ENCODE measurements at regions of chr15 and their contacts with region 1.

Region 1: DNA sequence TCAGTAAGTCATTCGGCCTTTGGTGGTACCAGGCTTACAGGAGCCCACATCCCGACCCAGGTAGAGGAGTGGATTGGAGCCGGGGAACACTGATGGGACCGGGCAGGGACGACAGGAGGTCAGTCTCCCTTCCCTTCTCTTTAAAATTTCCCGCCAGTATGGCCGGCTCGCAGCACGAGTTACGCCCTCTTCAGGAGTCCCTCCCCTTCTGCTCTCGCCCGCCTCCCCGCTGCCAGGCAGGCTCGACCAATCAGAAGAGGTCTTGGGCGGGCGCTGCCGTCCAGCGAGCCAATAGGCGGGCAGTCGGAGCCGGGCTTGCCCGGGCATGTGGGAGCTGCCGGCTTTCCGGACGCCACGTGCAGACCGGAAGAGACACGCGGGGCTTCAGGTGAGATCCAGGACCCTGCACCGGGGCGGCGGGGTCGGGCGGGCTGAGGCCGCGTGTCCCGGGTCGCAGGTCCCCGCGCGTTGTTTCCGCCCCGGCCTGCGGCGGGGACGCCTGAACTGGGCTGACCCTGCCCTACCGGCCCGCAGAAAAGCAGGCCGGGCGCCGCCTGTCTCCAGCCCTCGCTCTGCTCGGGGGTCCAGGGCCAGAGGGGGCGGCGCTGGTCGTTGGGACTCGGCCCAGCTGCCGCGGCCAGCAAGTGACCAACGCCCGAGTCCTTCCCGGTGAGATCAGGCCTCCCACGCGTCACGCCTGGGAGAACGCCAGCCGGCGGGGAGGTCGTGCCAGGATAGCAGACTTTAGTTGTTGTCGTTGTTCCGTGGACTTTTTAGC is at the start of gene AEN:
- DNase-seq: peak; percentile 96 to 98 (median 98)
- ATAC-seq: peak; percentile 99
- H3K4me3 ChIP-seq: peak within 1 kb of the TSS; percentile 56
- H3K27ac ChIP-seq: peak within 1 kb of the TSS; percentile 26
- H3K4me1 ChIP-seq: no peaks in the 10 kb centered on the region
- H3K27me3 ChIP-seq: no peaks in the 10 kb centered on the region
- total RNA-seq, gene AEN: 4.0 to 9.5 (median 6.9) TPM

Region 2: DNA sequence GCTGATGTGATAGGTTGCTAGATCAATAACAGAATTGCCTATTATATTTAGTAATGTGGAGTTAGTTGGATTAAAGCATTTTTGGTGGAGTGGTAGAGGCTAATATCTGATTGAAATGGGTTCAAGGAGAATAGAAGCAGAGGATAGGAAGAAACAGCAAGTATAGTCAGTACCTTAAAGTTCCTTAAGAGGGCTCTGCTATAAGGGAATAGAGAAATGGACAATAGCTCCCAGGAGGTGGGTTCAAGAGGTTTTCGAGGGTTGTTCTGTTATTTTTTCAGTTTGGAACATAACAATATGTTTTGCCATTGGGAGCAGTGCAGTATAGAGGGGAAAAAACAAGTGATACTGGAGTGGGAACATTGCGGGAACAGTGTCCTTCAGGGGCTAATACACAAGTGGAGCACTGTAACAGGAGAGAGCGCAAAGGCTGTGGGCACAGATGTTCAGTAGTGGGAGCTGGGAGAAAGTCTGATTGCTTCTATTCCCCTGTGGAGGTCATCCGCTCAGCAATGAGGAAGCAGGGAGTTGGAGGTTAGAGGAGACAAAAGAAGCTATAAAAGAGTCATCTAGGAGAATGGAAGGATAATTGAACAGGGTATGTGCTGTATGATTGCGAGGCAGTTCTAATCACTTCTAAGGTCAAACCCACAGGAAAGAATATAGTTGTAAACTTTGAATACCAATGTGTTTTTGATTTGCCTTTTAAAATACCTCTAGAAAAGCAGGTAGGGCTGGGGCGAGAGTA is 150.4 kb before region 1 on chr15:
- intact Hi-C with region 1: loop called in 1 of 4 experiments (anchors 5 kb)
- DNase-seq: no peak
- ATAC-seq: no peak
- H3K4me3 ChIP-seq: no peak overlapping the region
- H3K27ac ChIP-seq: no peak overlapping the region
- H3K4me1 ChIP-seq: peaks cover 2% of the 10 kb centered on the region
- H3K27me3 ChIP-seq: no peaks in the 10 kb centered on the region

Region 3: DNA sequence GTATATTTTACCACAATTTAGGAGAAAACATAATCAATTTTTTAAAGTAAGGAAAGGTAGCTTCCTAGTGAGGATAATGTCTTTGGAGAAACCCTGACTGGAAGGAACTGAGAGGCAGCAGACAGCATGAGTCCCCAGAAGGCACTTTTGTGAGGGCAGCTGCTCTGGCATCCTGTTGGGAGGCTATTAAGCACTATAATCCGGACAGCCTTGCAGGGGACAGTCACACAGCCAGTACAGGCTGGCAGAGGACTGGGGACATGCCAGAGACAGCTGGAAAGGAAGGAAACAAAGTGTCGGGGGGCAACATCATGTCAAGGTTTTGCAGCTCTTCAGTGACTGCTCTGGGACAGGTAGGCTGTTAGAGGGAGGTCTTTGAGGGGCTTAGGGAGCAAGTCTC is 197.7 kb after region 1 on chr15:
- intact Hi-C with region 1: no loop called
- DNase-seq: no peak
- ATAC-seq: no peak
- H3K4me3 ChIP-seq: no peak overlapping the region
- H3K27ac ChIP-seq: no peak overlapping the region
- H3K4me1 ChIP-seq: no peaks in the 10 kb centered on the region
- H3K27me3 ChIP-seq: no peaks in the 10 kb centered on the region

Region 4: GRCh38 chr15:88834211-88834812 is 213.1 kb after region 1 on chr15:
- intact Hi-C with region 1: loop called in 1 of 4 experiments (anchors 10 kb)
- DNase-seq: peak; percentile 67 to 83 (median 83)
- ATAC-seq: peak; percentile 77 to 81
- H3K4me3 ChIP-seq: no peak overlapping the region
- H3K27ac ChIP-seq: no peak overlapping the region
- H3K4me1 ChIP-seq: no peaks in the 10 kb centered on the region
- H3K27me3 ChIP-seq: no peaks in the 10 kb centered on the region